OCI-LY7 (cell line): ENCODE measurements at regions of chr17 and their contacts with region 1.

Region 1: DNA sequence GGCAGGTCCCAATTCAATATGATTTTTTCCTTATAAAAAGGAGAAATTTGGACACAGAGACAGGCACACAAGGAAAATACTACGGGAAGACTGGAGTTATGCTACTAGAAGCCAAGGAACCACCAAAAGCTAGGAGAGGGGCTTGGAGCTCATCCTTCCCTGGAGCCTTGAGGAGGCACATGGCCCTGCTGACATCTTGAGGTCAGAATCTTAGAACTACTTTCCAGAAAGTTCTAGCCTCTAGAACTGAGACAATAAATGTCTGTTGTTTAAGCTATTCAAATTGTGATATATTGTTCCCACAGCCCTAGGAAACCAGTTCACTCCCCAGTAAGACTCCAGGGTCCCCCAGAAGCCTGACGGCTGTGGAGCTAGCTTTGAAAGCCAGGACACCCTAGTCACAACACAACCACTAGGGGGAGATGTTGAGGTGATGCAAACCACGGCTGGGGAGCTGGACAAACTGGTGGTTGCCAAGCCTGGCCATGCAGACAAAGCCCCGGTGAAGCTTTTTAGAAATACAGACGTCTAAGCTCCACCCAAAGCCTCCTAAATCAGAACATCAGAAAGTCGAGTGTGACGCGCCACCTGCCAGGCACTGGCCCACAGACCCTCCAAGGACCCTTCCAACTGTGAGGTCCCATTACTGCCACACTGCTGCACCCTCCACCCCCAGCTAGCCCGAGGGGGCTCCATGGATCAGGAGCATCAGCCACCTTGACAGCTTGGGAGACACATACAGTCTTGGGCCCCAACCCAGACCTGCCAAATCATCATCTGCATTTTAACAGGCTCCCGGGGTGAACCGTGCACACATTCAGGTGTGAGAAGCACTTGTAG is 106.4 kb downstream of the SLC39A11 start:
- DNase-seq: peak; percentile 81
- H3K4me3 ChIP-seq: no peak overlapping the region
- H3K27ac ChIP-seq: no peak overlapping the region
- H3K4me1 ChIP-seq: no peaks in the 10 kb centered on the region
- CTCF ChIP-seq: peak; percentile 100

Region 2: GRCh38 chr17:73359987-73360410 is 373.9 kb after region 1 on chr17:
- CTCF ChIA-PET with region 1: no interaction called
- POLR2A ChIA-PET with region 1: no interaction called
- intact Hi-C with region 1: loop called (anchors 10 kb)
- DNase-seq: no peak
- H3K4me3 ChIP-seq: no peak overlapping the region
- H3K27ac ChIP-seq: no peak overlapping the region
- H3K4me1 ChIP-seq: no peaks in the 10 kb centered on the region
- CTCF ChIP-seq: no peak